Breast epithelium (tissue), 4 donors: ENCODE measurements at regions of chr13 and their contacts with region 1.

Region 1: DNA sequence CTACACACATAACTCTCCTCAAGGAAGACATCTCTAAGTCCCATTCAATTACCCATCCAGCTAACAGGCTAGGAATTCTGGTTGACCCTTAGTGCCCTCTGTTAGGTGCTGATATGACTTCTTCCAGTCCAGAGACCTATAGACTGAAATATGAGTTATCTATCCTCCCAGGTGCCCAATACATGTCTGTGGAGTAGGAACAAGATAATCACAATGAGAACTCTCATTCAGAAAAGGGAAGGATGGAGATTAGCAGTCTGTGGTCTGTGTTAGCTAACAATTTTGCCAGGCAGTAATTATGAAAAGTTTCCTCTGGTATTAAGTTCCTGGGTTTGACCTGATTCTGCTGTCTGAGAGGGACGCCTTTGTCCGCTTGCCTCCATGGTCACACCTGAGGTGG is 44.2 kb upstream of the SLAIN1 start:
- DNase-seq: no peak
- H3K4me3 ChIP-seq: no peak overlapping the region
- H3K27ac ChIP-seq: no peak overlapping the region
- H3K4me1 ChIP-seq: no peaks in the 10 kb centered on the region
- H3K27me3 ChIP-seq: no peaks in the 10 kb centered on the region
- CTCF ChIP-seq: no peak
- POLR2A ChIP-seq: no peak

Region 2: DNA sequence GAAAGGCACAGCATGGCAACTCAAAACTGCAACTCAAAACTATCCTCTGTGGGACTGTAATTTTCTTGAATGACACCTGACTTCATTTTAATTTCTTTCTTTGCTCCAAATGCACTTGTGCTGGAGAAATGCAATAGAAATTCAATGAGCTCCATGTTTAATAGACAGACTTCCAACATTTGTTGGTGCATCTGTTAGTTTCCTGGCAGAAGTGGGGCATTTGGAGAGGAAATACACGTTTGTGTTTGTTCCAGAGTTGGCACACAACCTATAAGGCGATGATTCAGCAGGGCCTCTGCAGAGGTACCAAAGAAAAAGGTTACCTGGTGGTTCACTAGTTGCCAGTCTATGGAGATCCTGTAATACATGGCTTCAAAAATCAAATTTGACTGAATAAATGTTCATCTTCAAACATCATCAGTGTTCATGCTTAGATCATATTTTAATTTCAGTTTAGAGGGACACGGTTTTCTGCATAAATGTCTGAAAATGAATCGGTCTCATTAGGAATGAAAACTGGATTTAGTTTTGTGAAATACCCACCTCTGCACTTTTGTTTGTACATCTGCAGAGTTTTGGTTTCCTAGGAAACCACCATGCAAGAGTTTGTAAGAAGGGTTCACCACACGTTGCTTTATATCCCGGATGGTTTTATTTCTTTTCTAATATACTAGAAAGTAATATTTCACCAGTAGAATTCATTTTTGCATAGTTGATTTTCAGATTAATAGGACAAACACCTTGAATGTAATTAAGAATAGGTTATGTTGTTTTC is 1027.5 kb after region 1 on chr13:
- intact Hi-C with region 1: loop called (anchors 5 kb)
- DNase-seq: no peak
- H3K4me3 ChIP-seq: no peak overlapping the region
- H3K27ac ChIP-seq: no peak overlapping the region
- H3K4me1 ChIP-seq: no peaks in the 10 kb centered on the region
- H3K27me3 ChIP-seq: no peaks in the 10 kb centered on the region
- CTCF ChIP-seq: no peak
- POLR2A ChIP-seq: no peak

Region 3: DNA sequence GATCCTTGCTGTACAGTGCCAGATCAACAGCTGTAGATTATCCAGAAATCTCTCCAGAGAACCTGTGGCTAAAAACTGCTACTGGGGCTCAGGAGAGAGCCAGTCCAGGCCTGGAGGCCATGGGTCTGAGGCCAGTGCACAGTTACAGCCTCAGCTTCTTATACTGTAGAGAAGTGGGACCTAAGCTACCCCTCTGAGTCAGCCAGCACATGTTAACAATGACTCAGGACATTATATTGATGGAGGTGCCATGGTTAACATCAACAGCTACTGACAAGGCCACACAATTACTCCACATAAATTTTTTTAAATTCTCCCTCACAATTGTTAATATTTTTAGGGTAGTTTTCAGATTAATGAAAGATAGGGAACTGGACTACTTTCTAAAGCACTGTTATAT is 1614.3 kb after region 1 on chr13:
- intact Hi-C with region 1: loop called (anchors 5 kb)
- DNase-seq: no peak
- H3K4me3 ChIP-seq: no peak overlapping the region
- H3K27ac ChIP-seq: no peak overlapping the region
- H3K4me1 ChIP-seq: no peaks in the 10 kb centered on the region
- H3K27me3 ChIP-seq: no peaks in the 10 kb centered on the region
- CTCF ChIP-seq: no peak
- POLR2A ChIP-seq: no peak